WTC11 (cell line): ENCODE measurements at regions of chr6 and their contacts with region 1.

Region 1: DNA sequence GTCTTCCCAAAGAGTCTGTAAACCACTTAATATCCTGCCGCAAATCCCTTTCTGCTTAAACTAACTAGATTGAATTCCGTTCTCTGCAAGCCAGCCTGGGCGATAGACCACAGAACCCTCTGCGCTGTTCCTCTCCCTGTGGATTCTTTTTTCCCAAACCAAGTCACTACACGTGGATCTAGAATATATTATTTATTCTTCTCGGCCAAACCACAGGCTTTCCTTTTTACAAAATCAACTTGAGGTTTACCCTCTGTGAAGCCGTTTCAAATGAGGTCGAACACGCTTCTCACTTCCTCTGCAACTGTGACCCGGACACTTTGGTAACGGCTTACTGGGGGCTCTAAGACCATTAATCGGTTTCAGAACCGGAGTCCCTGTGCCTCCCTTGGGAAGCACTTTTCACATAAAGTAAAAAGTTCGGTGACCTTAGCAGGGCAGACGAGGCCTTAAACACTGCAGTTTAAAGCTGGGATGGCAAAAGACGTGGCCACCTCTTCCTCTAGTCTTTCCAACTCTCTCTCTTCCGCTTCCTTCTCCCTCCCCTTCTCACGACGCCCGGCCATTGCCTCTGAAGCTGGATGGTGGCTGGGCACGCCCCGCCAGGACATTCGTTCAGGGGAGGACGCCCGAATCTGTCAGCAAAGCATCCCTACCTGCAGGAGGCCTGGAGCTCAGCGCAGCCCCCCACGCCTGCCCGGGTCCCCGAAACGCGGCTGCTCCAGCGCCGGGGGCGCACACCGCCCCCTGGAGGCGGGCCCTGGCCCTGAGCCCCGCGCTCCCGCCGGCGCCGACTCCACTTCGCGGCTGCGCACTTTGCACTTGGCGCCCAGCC is 55.0 kb upstream of the FOXC1 start:
- DNase-seq: peak; percentile 60
- ATAC-seq: peak; percentile 79
- H3K4me3 Mint-ChIP-seq: peak overlapping the region; percentile 69
- H3K27ac Mint-ChIP-seq: no peak overlapping the region
- H3K4me1 Mint-ChIP-seq: peaks cover 16% of the 10 kb centered on the region
- H3K27me3 Mint-ChIP-seq: peaks cover 27% of the 10 kb centered on the region
- CTCF ChIP-seq: peak; percentile 75

Region 2: GRCh38 chr6:1335367-1336037 is 219.2 kb before region 1 on chr6:
- CTCF ChIA-PET with region 1: no interaction called
- POLR2A ChIA-PET with region 1: no interaction called
- DNase-seq: no peak
- ATAC-seq: peak; percentile 26
- H3K4me3 Mint-ChIP-seq: peak overlapping the region; percentile 18
- H3K27ac Mint-ChIP-seq: no peak overlapping the region
- H3K4me1 Mint-ChIP-seq: peaks cover 34% of the 10 kb centered on the region
- H3K27me3 Mint-ChIP-seq: peaks cover 3% of the 10 kb centered on the region; the same call in 1 of the 2 replicates
- CTCF ChIP-seq: no peak

Region 3: GRCh38 chr6:1498491-1499113 is 56.1 kb before region 1 on chr6:
- CTCF ChIA-PET with region 1: interaction called, 10 read pairs
- POLR2A ChIA-PET with region 1: no interaction called
- DNase-seq: no peak
- ATAC-seq: peak; percentile 49
- H3K4me3 Mint-ChIP-seq: no peak overlapping the region
- H3K27ac Mint-ChIP-seq: no peak overlapping the region
- H3K4me1 Mint-ChIP-seq: peaks cover 13% of the 10 kb centered on the region
- H3K27me3 Mint-ChIP-seq: no peaks in the 10 kb centered on the region
- CTCF ChIP-seq: no peak